ENCODE measurements at regions of chr16 and their contacts with region 1.

Region 1: GRCh38 chr16:69565671-69566239 is at the start of gene NFAT5:
- DNase-seq: peak; percentile 96
- ATAC-seq: peak; percentile 75
- H3K4me3 ChIP-seq: peak within 1 kb of the TSS; percentile 63 to 88 (median 73)
- H3K4me3 Mint-ChIP-seq: peak within 1 kb of the TSS; percentile 97
- H3K27ac ChIP-seq: peak within 1 kb of the TSS; percentile 88 to 95
- H3K27ac Mint-ChIP-seq: peak within 1 kb of the TSS; percentile 94
- H3K4me1 ChIP-seq: peaks cover 33 to 39% of the 10 kb centered on the region in 2 donors
- H3K4me1 Mint-ChIP-seq: peaks cover 48% of the 10 kb centered on the region
- H3K27me3 ChIP-seq: no peaks in the 10 kb centered on the region
- H3K27me3 Mint-ChIP-seq: no peaks in the 10 kb centered on the region
- CTCF ChIP-seq: no peak
- total RNA-seq, gene NFAT5: 50.0 and 52.1 TPM in 2 replicates

Region 2: DNA sequence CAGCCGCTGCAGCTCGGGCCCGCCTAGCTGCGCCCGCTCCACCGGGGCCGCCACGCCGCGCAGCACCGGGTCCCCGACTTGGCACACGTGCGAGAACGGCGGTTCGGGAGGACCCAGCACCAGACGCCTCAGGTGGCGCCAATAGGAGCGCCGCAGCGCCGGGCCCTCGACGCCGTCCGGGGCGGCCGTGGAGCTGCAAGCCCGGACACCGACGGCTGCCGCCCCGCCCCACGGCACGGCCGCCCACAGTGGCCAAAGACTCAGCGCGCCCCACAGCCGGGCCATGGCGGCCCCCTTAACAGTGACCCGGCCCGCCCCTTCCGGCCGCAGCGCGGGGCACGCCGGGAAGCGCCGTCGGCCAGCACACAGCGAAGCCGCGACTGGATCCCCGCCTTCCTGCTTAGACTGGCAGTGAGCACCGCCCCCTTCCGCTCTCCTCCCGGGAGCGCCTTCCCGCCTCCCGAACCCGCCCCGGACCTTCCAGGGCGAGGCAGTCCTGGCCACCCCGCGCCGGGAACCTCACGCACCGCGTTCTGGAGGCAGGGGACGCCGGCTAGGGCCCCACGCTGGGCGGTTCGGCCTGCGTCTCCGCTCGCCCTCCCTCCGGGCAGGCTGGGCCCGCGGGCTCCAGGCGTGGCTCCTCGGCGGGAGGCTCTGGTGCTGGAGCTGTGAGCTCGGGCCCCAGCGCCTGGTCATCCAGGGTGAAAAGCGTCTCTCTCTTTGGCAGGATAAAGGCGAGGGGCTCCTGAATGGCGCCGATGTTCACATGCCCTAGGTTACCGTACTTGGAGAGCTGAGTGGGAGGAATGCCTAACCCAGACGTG is 235.3 kb before region 1 on chr16 and contains the start of gene PDF:
- CTCF ChIA-PET with region 1: no interaction called
- POLR2A ChIA-PET with region 1: no interaction called
- intact Hi-C with region 1: loop called (anchors 2 kb)
- DNase-seq: peak; percentile 86
- ATAC-seq: peak; percentile 97
- H3K4me3 ChIP-seq: peak within 1 kb of the TSS; percentile 38 to 88 (median 70)
- H3K4me3 Mint-ChIP-seq: peak within 1 kb of the TSS; percentile 86
- H3K27ac ChIP-seq: peak within 1 kb of the TSS; percentile 41 to 88
- H3K27ac Mint-ChIP-seq: peak within 1 kb of the TSS; percentile 80
- H3K4me1 ChIP-seq: peaks cover 15 to 32% of the 10 kb centered on the region in 2 donors
- H3K4me1 Mint-ChIP-seq: peaks cover 44% of the 10 kb centered on the region
- H3K27me3 ChIP-seq: no peaks in the 10 kb centered on the region
- H3K27me3 Mint-ChIP-seq: no peaks in the 10 kb centered on the region
- CTCF ChIP-seq: no peak
- total RNA-seq, gene PDF: 9.2 and 9.6 TPM in 2 replicates

Region 3: GRCh38 chr16:69386596-69386995 is 179.2 kb before region 1 on chr16:
- CTCF ChIA-PET with region 1: no interaction called
- POLR2A ChIA-PET with region 1: no interaction called
- intact Hi-C with region 1: loop called (anchors 2 kb)
- DNase-seq: no peak
- ATAC-seq: no peak
- H3K4me3 ChIP-seq: peak overlapping the region in 1 of 5 experiments; percentile 64
- H3K4me3 Mint-ChIP-seq: peak overlapping the region; percentile 57
- H3K27ac ChIP-seq: no peak overlapping the region
- H3K27ac Mint-ChIP-seq: no peak overlapping the region
- H3K4me1 ChIP-seq: peaks cover 31 to 33% of the 10 kb centered on the region in 2 donors
- H3K4me1 Mint-ChIP-seq: peaks cover 30% of the 10 kb centered on the region
- H3K27me3 ChIP-seq: no peaks in the 10 kb centered on the region
- H3K27me3 Mint-ChIP-seq: no peaks in the 10 kb centered on the region
- CTCF ChIP-seq: no peak

Region 4: DNA sequence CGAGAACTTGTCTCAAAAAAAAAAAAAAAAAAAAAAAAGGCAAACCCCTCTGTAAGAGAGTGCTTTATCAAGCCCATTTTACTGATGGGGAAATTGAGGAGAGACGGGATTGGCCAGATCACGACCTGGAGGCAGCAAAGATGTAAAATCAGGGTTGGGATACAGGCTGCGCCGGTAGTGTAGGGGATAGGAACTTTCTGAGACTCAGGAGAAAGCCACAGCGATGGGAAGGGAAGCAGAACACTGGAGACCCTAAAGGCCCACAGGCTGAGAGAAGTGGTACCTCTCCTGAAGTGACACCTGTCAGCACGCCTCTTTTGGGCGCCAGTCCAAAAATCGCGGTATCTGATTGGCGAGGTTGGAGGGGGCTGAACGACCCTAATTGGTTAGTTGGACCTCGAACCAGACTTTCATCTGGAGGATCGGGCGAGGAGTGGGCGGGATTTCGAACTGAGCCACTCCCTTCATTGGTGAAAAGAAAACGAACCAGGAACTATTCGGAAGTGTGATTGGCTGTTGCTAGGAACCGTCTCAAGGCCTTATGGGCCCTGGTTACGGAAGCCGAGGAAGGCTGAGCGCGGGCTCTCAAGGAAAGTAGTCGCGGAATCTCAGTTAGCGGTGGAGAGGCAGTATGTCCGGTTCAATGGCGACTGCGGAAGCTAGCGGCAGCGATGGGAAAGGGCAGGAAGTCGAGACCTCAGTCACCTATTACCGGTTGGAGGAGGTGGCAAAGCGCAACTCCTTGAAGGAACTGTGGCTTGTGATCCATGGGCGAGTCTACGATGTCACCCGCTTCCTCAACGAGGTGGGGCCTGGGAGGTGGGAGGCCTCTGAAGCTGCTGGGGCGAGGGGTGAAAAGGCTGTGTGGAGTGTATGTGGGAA is 141.5 kb before region 1 on chr16 and contains the start of gene CYB5B:
- CTCF ChIA-PET with region 1: no interaction called
- POLR2A ChIA-PET with region 1: interaction called, 3 read pairs
- intact Hi-C with region 1: loop called (anchors 1 kb)
- DNase-seq: peak; percentile 97
- ATAC-seq: peak; percentile 95
- H3K4me3 ChIP-seq: peak within 1 kb of the TSS; percentile 43 to 95 (median 89)
- H3K4me3 Mint-ChIP-seq: peak within 1 kb of the TSS; percentile 93
- H3K27ac ChIP-seq: peak within 1 kb of the TSS; percentile 52 to 88
- H3K27ac Mint-ChIP-seq: peak within 1 kb of the TSS; percentile 91
- H3K4me1 ChIP-seq: peaks cover 8 to 12% of the 10 kb centered on the region in 2 donors
- H3K4me1 Mint-ChIP-seq: peaks cover 25% of the 10 kb centered on the region
- H3K27me3 ChIP-seq: no peaks in the 10 kb centered on the region
- H3K27me3 Mint-ChIP-seq: no peaks in the 10 kb centered on the region
- CTCF ChIP-seq: no peak
- total RNA-seq, gene CYB5B: 56.7 and 64.7 TPM in 2 replicates

Region 5: DNA sequence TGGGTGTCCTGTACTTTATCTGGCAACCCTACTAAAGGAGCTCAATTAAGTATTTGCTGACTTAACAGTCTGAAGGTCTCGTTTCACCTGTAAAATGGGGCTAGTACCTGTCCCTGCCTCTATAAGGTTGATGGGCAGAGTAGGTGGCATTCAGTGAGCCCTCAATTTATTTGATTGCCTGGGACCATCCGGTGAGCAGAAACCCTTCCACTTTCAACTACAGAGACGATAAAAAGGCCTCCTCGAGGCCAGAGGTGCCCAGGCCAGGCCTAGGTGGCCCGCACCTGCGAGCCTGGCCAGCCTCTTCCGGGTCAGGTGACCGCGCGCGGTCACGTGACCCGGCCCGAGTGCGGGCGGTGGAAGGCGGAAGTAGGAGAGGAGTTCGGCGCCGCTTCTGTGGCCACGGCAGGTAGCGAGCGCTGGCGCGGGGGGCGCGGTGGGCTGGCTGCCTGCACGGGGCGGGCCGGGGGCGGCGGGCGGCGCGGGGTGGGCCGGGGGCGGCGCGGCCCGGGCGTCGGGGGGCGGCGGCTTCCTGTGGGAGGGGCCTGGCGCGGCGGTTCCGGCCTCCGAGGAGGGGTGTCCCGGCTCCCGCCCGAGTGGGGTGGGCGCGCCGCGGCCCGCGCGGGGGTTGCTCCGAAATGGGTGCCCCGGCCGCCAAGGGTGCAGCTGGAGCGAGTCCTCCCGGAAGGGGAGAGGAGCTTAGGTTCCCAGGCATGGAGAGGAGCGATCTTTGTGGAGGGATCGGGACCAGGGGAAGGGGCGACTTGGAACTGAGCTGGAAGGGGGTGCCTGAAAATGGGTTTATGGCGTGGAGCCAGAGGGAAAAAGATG is 196.4 kb after region 1 on chr16 and contains the start of gene WWP2:
- CTCF ChIA-PET with region 1: no interaction called
- POLR2A ChIA-PET with region 1: no interaction called
- intact Hi-C with region 1: loop called (anchors 2 kb)
- DNase-seq: peak; percentile 92
- ATAC-seq: peak; percentile 82
- H3K4me3 ChIP-seq: peak within 1 kb of the TSS; percentile 87 to 95 (median 92)
- H3K4me3 Mint-ChIP-seq: peak within 1 kb of the TSS; percentile 90
- H3K27ac ChIP-seq: peak within 1 kb of the TSS; percentile 92 to 98
- H3K27ac Mint-ChIP-seq: peak within 1 kb of the TSS; percentile 97
- H3K4me1 ChIP-seq: peaks cover 14 to 23% of the 10 kb centered on the region in 2 donors
- H3K4me1 Mint-ChIP-seq: peaks cover 30% of the 10 kb centered on the region
- H3K27me3 ChIP-seq: no peaks in the 10 kb centered on the region
- H3K27me3 Mint-ChIP-seq: no peaks in the 10 kb centered on the region
- CTCF ChIP-seq: no peak
- total RNA-seq, gene WWP2: 100 and 105 TPM in 2 replicates